ENCODE measurements at regions of chr22 and their contacts with region 1.

Region 1: GRCh38 chr22:47294222-47294532 is 531.7 kb downstream of the TBC1D22A start:
- DNase-seq: no peak
- H3K4me3 ChIP-seq: no peak overlapping the region
- H3K27ac ChIP-seq: no peak overlapping the region
- H3K4me1 ChIP-seq: peaks cover 4% of the 10 kb centered on the region
- H3K27me3 ChIP-seq: no peaks in the 10 kb centered on the region
- CTCF ChIP-seq: no peak
- POLR2A ChIP-seq: no peak

Region 2: DNA sequence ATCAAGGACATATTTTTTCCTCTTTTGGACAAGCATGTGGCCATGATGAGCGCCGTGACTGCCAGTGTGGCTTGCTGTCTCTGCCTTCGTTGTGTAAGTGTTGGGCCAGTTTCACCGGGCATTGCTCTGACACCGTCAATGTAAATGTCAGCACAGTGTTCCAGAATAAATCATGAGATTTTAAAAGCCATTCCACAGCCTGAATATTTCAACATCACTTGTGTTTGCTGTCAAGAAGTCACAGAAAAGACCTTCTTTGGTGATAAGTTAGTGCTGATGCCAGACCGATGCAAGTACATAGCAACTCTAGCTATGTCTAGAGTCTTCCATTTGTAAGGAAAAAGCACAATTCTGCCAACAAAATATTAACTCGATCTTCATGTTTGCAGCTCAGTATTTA is 63.9 kb before region 1 on chr22:
- intact Hi-C with region 1: loop called (anchors 5 kb)
- DNase-seq: no peak
- H3K4me3 ChIP-seq: no peak overlapping the region
- H3K27ac ChIP-seq: no peak overlapping the region
- H3K4me1 ChIP-seq: no peaks in the 10 kb centered on the region
- H3K27me3 ChIP-seq: no peaks in the 10 kb centered on the region
- CTCF ChIP-seq: no peak
- POLR2A ChIP-seq: no peak

Region 3: DNA sequence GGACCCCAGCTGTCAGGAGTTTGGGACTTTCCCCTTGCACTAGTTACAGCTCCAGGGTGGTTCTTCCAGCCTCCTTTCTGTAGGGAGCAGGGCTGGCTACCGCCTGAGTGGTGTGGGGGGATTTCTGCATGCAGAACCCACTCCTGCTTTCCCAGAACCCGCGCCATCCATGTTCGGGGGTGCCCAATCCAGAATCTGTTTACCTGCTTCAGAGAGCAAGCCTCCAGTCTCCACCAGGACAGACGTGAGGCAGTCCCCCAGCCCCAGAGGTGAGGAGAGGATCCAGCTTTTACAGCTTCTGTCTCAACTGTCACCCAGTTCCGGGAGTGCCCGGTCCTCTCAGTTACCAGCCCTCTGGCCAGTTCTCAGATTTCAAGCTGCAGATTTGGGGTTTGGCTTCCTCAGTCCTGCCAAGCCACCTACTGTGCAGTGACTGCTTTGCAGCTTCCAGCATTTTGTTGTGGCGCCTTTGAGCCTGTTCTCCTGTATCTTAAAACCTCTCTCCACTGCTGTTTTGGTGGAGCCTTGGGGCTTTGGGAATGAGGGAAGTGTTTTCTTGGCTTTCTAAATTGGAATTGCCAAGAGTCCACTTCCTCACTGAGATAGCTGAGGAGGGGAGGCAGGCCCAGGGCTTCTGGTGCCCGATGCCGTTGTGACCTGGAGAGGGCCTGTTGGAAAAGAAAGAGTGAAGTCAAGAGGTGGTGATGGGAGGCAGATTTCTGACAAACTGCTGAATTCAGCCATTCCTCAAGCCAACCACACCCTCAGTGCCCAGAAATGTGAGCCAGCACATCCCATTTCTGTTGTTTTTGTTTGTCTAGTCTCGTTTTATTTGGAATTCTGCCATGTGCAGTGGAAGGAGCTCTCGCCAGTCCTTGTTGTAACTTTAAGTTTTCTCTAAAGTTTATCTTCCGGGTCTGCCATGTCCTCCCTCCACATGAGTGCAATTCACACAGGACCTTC is 18.4 kb before region 1 on chr22:
- intact Hi-C with region 1: no loop called
- DNase-seq: no peak
- H3K4me3 ChIP-seq: no peak overlapping the region
- H3K27ac ChIP-seq: no peak overlapping the region
- H3K4me1 ChIP-seq: no peaks in the 10 kb centered on the region
- H3K27me3 ChIP-seq: no peaks in the 10 kb centered on the region
- CTCF ChIP-seq: no peak
- POLR2A ChIP-seq: no peak

Measured in prostate gland (tissue), 2 donors.